Activated CD8-positive, alpha-beta T cell treated with anti-CD3 and anti-CD28 coated beads for 36 hours (primary cell): ENCODE measurements at regions of chr17 and their contacts with region 1.

Region 1: GRCh38 chr17:34361478-34362061 is 1.5 kb downstream of the CCL1 start:
- DNase-seq: peak; percentile 90
- ATAC-seq: peak; percentile 95
- H3K4me3 Mint-ChIP-seq: no peak overlapping the region
- H3K27ac Mint-ChIP-seq: no peak overlapping the region
- H3K4me1 Mint-ChIP-seq: peaks cover 12% of the 10 kb centered on the region
- H3K27me3 Mint-ChIP-seq: peaks cover 6% of the 10 kb centered on the region
- CTCF ChIP-seq: peak; percentile 94

Region 2: DNA sequence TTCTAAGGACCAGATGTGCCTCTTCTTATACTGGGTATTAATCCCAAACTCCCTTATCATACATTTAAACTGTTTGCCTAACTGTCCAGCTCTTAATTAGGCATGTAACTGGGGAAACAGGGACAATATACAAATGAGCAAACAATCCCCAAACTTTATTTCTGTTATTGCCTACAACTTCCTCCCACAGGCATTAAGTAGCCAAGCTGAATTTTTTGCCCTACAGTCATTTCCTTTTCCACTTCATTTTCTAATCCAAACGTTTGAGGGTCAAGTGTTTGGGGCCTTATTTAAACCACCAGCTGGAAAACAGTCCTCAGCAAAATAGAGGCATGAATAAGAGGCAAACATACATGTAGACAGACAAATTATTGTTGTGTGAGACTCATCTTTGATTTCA is 183.9 kb before region 1 on chr17:
- CTCF ChIA-PET with region 1: interaction called, 40 read pairs
- POLR2A ChIA-PET with region 1: no interaction called
- intact Hi-C with region 1: no loop called
- DNase-seq: no peak
- ATAC-seq: no peak
- H3K4me3 Mint-ChIP-seq: no peak overlapping the region
- H3K27ac Mint-ChIP-seq: no peak overlapping the region
- H3K4me1 Mint-ChIP-seq: no peaks in the 10 kb centered on the region
- H3K27me3 Mint-ChIP-seq: no peaks in the 10 kb centered on the region
- CTCF ChIP-seq: no peak

Region 3: GRCh38 chr17:34206569-34206968 is 155.0 kb before region 1 on chr17:
- CTCF ChIA-PET with region 1: interaction called, 319 read pairs
- POLR2A ChIA-PET with region 1: interaction called, 14 read pairs
- intact Hi-C with region 1: loop called (anchors 2 kb)
- DNase-seq: no peak
- ATAC-seq: no peak
- H3K4me3 Mint-ChIP-seq: no peak overlapping the region
- H3K27ac Mint-ChIP-seq: no peak overlapping the region
- H3K4me1 Mint-ChIP-seq: peaks cover 5% of the 10 kb centered on the region
- H3K27me3 Mint-ChIP-seq: peaks cover 14% of the 10 kb centered on the region
- CTCF ChIP-seq: no peak

Region 4: GRCh38 chr17:34235389-34236028 is 126.1 kb before region 1 on chr17:
- CTCF ChIA-PET with region 1: interaction called, 15 read pairs
- POLR2A ChIA-PET with region 1: no interaction called
- intact Hi-C with region 1: no loop called
- DNase-seq: no peak
- ATAC-seq: no peak
- H3K4me3 Mint-ChIP-seq: no peak overlapping the region
- H3K27ac Mint-ChIP-seq: no peak overlapping the region
- H3K4me1 Mint-ChIP-seq: no peaks in the 10 kb centered on the region
- H3K27me3 Mint-ChIP-seq: peaks cover 20% of the 10 kb centered on the region
- CTCF ChIP-seq: no peak

Region 5: GRCh38 chr17:34321964-34322363 is 39.6 kb before region 1 on chr17:
- CTCF ChIA-PET with region 1: interaction called, 14 read pairs
- POLR2A ChIA-PET with region 1: no interaction called
- intact Hi-C with region 1: no loop called
- DNase-seq: no peak
- ATAC-seq: no peak
- H3K4me3 Mint-ChIP-seq: no peak overlapping the region
- H3K27ac Mint-ChIP-seq: no peak overlapping the region
- H3K4me1 Mint-ChIP-seq: no peaks in the 10 kb centered on the region
- H3K27me3 Mint-ChIP-seq: peaks cover 2% of the 10 kb centered on the region
- CTCF ChIP-seq: no peak

Region 6: GRCh38 chr17:34349751-34350150 is 11.8 kb before region 1 on chr17:
- CTCF ChIA-PET with region 1: interaction called, 21 read pairs
- POLR2A ChIA-PET with region 1: no interaction called
- intact Hi-C with region 1: no loop called
- DNase-seq: no peak
- ATAC-seq: no peak
- H3K4me3 Mint-ChIP-seq: no peak overlapping the region
- H3K27ac Mint-ChIP-seq: no peak overlapping the region
- H3K4me1 Mint-ChIP-seq: no peaks in the 10 kb centered on the region
- H3K27me3 Mint-ChIP-seq: peaks cover 4% of the 10 kb centered on the region
- CTCF ChIP-seq: no peak

Region 7: DNA sequence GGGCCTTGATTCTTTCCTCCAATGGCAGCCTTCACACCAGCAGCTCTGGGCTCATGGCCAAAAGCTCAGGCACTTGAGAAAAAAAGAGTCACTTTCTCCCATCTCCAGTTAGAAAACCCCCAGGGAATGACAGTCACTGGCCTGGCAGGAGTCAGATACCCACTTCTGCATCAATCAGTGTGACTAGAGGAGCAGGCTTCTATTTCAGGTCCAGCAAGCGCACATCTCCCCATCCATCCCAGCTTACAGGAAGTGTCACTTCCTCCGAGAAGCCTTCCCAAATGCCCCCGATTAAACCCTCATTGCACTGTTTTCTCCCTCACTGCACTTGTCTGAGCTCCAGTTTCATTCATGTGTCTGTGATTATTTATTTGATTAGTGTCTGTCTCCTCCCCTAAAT is 31.8 kb after region 1 on chr17:
- CTCF ChIA-PET with region 1: interaction called, 16 read pairs
- POLR2A ChIA-PET with region 1: no interaction called
- intact Hi-C with region 1: no loop called
- DNase-seq: no peak
- ATAC-seq: no peak
- H3K4me3 Mint-ChIP-seq: no peak overlapping the region
- H3K27ac Mint-ChIP-seq: no peak overlapping the region
- H3K4me1 Mint-ChIP-seq: peaks cover 3% of the 10 kb centered on the region
- H3K27me3 Mint-ChIP-seq: peaks cover 9% of the 10 kb centered on the region
- CTCF ChIP-seq: no peak